Activated T-helper 1 cell treated with anti-CD3 and anti-CD28 coated beads, Interleukin-12 subunit alpha, Interleukin-12 subunit beta, Interleukin-2, Interleukin-4 antibody, amounts not matched to agents 30 ng/mL and 10 ng/mL and 1 ng/mL, durations not matched to agents 14 hours and 24 hours and 36 hours (primary cell): ENCODE measurements at regions of chr12 and their contacts with region 1.

Region 1: GRCh38 chr12:116325336-116325664 is 47.8 kb upstream of the MED13L start:
- DNase-seq: peak; percentile 31
- H3K4me3 Mint-ChIP-seq: no peak overlapping the region
- H3K27ac Mint-ChIP-seq: peak overlapping the region; percentile 75
- H3K4me1 Mint-ChIP-seq: peaks cover 30% of the 10 kb centered on the region
- H3K27me3 Mint-ChIP-seq: peaks cover 8% of the 10 kb centered on the region

Region 2: DNA sequence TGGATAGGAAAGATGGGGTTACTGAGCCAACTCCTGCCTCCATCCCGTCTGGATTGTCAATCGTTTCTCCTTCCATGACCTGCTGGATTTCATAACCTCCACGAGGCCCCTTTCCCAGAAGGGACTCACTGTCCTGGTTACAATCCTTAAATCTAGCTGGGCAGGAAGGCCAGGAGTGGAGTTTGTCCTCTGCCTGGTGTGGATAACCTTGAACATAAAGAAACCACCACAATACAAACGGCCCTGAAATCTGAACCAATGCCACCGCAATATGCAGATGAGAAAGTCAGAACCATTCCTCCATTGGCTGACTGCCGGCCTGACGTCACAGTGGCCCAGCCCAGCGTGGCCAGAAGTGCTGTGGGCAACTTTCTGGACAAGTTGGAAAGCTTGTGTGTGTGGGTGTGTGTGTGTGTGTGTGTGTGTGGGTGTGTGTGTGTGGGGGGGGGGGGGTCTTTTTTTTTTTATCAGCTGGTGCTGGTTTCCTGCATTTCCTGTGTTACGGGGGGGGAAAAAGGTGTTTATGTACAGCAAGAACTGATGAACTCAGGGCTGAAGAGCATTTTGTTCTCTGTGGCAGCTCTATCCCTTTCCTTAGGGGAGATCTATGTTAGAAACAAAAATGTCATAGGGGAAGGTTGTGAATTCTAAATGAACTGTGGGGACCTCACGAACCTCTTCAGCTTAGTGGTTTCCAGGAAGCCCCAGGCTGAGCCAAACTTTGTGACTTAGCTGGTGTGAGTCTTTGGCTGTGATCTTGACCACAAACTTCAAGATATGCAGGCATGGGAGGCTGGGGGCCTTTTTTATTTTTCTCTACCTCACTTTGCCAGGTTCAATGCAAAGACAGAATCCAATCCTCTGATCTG is 33.8 kb after region 1 on chr12:
- intact Hi-C with region 1: loop called (anchors 2 kb)
- DNase-seq: peak; percentile 58
- H3K4me3 Mint-ChIP-seq: peak overlapping the region; percentile 56
- H3K27ac Mint-ChIP-seq: peak overlapping the region; percentile 85
- H3K4me1 Mint-ChIP-seq: peaks cover 33% of the 10 kb centered on the region
- H3K27me3 Mint-ChIP-seq: peaks cover 4% of the 10 kb centered on the region

Region 3: DNA sequence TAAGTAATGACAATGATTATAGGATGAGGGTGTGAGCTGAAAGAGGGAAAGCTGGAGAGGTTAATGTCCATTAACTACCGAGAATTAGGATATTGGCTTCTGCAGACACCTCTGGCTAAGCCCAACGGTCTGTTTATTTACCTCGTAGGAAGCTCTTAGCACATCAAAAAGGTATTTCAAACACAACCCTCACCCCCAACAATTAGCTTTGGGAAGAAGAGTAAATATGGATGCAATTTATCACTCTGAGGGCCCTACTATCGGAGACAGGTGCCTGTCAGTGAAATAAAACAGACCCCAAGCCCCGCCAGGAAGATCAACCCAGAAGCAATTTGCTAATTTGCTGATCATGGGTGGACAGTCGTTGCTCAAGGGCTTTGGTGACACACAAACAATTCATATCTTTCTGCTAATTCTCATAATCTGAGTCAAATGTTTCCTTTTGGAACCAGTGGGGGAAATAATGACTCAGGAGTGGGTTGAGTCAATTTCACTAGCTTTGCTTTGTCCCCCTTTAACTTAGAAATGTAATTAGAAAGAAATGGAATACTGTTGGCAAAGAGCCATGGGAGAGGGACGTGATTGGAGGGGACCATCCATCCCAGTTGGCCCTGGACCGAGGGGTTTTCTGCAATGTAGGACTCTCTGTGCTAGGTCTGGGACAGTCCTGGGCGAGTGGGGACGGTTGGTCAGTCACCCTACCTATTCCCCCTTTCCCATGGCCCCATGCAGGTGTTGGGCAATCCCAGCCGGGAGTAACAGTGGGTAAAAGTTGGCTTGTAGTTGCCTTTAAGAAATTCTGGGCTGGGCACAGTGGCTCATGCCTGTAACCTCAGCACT is 51.3 kb after region 1 on chr12:
- intact Hi-C with region 1: loop called (anchors 1 kb)
- DNase-seq: no peak
- H3K4me3 Mint-ChIP-seq: no peak overlapping the region
- H3K27ac Mint-ChIP-seq: no peak overlapping the region
- H3K4me1 Mint-ChIP-seq: peaks cover 7% of the 10 kb centered on the region
- H3K27me3 Mint-ChIP-seq: peaks cover 5% of the 10 kb centered on the region